Sciatic nerve (tissue), 2 donors: ENCODE measurements at regions of chr2 and their contacts with region 1.

Region 1: GRCh38 chr2:239871481-239872435 is 153.4 kb downstream of the NDUFA10 start:
- DNase-seq: peak; percentile 35
- ATAC-seq: no peak

Region 2: GRCh38 chr2:238509151-238509835 is 1362.5 kb before region 1 on chr2:
- intact Hi-C with region 1: no loop called
- DNase-seq: no peak
- ATAC-seq: peak; percentile 41

Region 3: GRCh38 chr2:239903803-239904202 is 32.0 kb after region 1 on chr2:
- intact Hi-C with region 1: loop called (anchors 1 kb)
- DNase-seq: no peak
- ATAC-seq: no peak